ENCODE measurements at regions of chr11 and their contacts with region 1.

Region 1: GRCh38 chr11:39374963-39375698 is 2084.3 kb downstream of the LRRC4C start:
- DNase-seq: peak; percentile 92
- H3K4me3 ChIP-seq: no peak overlapping the region
- H3K27ac ChIP-seq: peak overlapping the region; percentile 3
- H3K4me1 ChIP-seq: peaks cover 11% of the 10 kb centered on the region
- H3K27me3 ChIP-seq: no peaks in the 10 kb centered on the region
- CTCF ChIP-seq: peak; percentile 97

Region 2: GRCh38 chr11:37605224-37605623 is 1769.9 kb before region 1 on chr11:
- CTCF ChIA-PET with region 1: no interaction called
- POLR2A ChIA-PET with region 1: no interaction called
- intact Hi-C with region 1: no loop called
- DNase-seq: no peak
- H3K4me3 ChIP-seq: no peak overlapping the region
- H3K27ac ChIP-seq: no peak overlapping the region
- H3K4me1 ChIP-seq: no peaks in the 10 kb centered on the region
- H3K27me3 ChIP-seq: no peaks in the 10 kb centered on the region
- CTCF ChIP-seq: no peak

Region 3: DNA sequence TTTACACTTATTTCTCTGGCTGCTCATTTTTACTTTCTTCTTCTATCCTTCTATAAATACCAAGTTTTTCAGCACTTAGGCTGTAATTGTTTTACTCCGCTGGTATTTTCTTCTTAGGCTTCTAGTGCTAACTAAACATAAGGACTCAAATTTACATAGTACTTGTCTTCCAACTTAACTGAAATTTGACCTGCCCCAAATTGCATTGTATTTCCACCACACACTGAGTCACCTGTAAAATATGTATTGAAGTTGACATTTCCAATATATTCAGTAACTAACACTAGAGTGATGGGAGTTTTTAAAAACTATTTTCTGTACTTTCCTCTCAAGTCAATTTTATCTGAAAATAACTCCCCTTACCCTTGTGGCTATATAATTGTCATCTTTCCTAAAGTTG is 983.0 kb before region 1 on chr11:
- CTCF ChIA-PET with region 1: no interaction called
- POLR2A ChIA-PET with region 1: no interaction called
- intact Hi-C with region 1: loop called (anchors 10 kb)
- DNase-seq: no peak
- H3K4me3 ChIP-seq: no peak overlapping the region
- H3K27ac ChIP-seq: no peak overlapping the region
- H3K4me1 ChIP-seq: no peaks in the 10 kb centered on the region
- H3K27me3 ChIP-seq: no peaks in the 10 kb centered on the region
- CTCF ChIP-seq: no peak

Region 4: DNA sequence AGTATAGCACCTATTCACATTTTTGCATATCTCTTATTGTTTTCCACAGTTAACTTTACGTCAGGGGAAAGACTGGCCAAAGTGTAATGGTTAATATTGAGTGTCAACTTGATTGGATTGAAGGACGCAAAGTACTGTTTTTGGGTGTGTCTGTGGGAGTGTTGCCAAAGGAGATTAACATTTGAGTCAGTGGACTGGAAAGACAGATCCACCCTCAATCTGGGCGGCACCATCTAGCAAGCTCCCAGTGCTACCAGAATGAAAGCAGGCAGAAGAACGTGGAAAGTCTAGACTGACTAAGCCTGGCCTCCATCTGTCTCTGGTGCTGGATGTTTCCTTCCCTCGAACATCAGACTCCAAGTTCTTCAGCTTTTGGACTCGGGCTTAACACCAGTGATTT is 876.4 kb before region 1 on chr11:
- CTCF ChIA-PET with region 1: no interaction called
- POLR2A ChIA-PET with region 1: interaction called, 13 read pairs
- intact Hi-C with region 1: no loop called
- DNase-seq: no peak
- H3K4me3 ChIP-seq: no peak overlapping the region
- H3K27ac ChIP-seq: no peak overlapping the region
- H3K4me1 ChIP-seq: no peaks in the 10 kb centered on the region
- H3K27me3 ChIP-seq: no peaks in the 10 kb centered on the region
- CTCF ChIP-seq: no peak

Measured in A673 (cell line).